Right cardiac atrium (tissue), 5 donors: ENCODE measurements at regions of chr3 and their contacts with region 1.

Region 1: GRCh38 chr3:66038726-66039589 is at the start of gene MAGI1:
- DNase-seq: peak; percentile 90 to 96 (median 95)
- ATAC-seq: peak; percentile 93 to 94
- H3K4me3 ChIP-seq: peak within 1 kb of the TSS; percentile 79
- H3K27ac ChIP-seq: peak within 1 kb of the TSS; percentile 92
- H3K4me1 ChIP-seq: peaks cover 4% of the 10 kb centered on the region
- H3K27me3 ChIP-seq: no peaks in the 10 kb centered on the region
- total RNA-seq, gene MAGI1: 32.7 to 38.3 (median 34.4) TPM

Region 2: DNA sequence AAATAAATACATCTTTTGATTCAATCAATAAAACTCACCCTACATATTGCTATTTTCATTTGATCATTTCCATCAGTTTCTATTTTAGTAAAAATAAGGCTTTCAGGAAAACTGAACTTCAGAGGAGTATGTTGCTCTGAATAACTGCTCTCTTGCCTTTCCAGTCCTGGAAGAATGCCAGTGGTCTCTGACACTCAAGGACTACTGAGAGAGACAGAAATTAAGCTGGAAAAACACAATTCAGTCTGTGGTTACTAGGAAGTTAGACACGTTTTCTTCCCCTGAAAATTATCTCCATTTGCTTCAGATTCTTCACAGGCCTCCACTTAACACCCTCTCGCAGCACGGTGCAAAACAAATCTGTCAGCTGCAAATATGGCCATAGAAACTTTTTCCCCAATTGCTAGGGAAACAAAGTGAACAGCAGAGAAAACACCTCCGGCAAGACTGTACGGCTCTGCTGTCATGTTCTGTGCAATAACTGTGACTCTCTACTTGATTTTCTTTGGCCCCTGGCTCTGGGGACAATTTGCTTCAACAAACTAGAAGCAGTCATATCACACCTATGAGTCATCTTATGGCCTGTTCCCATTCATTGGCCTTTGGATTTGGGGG is 353.2 kb before region 1 on chr3:
- intact Hi-C with region 1: no loop called
- DNase-seq: no peak
- ATAC-seq: peak; percentile 37 to 50
- H3K4me3 ChIP-seq: no peak overlapping the region
- H3K27ac ChIP-seq: no peak overlapping the region
- H3K4me1 ChIP-seq: peaks cover 1% of the 10 kb centered on the region
- H3K27me3 ChIP-seq: no peaks in the 10 kb centered on the region

Region 3: DNA sequence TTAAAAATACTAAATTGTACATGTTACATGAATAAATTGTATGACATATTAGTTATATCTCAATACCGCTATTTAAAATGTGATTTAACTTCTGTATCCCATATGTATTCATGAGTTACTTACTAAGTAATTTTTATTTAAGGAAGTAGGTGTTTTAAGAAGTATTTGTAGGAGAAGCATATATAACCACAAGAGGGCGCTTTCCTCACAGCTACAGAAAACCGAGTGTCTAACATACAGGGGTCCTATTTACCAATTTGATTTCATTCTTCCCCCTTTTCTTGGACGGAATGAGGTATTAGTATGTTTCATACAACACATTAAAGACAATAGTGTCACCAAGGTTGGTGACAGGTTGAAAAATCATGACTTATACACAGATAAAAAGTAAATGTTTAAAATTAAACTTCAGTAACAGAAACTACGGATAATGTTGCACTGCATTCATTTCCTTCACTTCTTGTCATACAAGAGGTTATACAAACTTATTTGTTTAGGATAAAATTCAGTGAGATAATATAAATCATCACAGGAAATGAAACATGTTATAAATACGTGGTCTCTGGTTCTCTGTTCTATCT is 253.8 kb before region 1 on chr3:
- intact Hi-C with region 1: loop called in 2 of 4 experiments (anchors 5 to 10 kb)
- DNase-seq: no peak
- ATAC-seq: no peak
- H3K4me3 ChIP-seq: no peak overlapping the region
- H3K27ac ChIP-seq: no peak overlapping the region
- H3K4me1 ChIP-seq: peaks cover 4% of the 10 kb centered on the region
- H3K27me3 ChIP-seq: no peaks in the 10 kb centered on the region

Region 4: GRCh38 chr3:65806600-65806999 is 232.4 kb before region 1 on chr3:
- intact Hi-C with region 1: loop called in 1 of 4 experiments (anchors 10 kb)
- DNase-seq: no peak
- ATAC-seq: no peak
- H3K4me3 ChIP-seq: no peak overlapping the region
- H3K27ac ChIP-seq: no peak overlapping the region
- H3K4me1 ChIP-seq: peaks cover 9% of the 10 kb centered on the region
- H3K27me3 ChIP-seq: no peaks in the 10 kb centered on the region

Region 5: DNA sequence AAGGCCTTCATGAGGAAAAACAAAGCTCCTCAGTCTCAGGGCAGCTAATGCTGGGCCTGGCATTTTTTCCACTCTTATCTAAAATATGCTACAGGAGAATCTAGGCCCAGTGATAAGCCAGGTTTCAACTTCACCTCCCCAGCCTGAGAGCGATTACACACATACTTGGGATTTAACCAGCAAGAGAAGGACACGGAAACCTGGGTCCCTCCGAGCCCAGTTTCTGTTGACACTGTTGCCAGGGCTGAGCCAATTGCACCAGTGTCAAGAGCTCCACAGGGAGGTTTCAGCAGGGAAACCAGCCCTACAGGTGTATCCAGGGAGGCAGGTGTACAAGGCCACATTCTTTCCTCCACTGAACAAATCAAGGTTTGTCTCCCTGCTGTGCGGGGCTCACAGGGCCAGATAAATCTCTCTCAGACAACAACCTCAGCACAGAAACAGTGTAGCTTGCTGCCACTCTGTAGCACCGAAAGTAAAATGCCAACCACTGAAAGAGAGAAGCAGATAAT is 85.6 kb before region 1 on chr3:
- intact Hi-C with region 1: loop called in 1 of 4 experiments (anchors 10 kb)
- DNase-seq: peak in 1 of 3 donors; percentile 52
- ATAC-seq: peak; percentile 53 to 56
- H3K4me3 ChIP-seq: no peak overlapping the region
- H3K27ac ChIP-seq: peak overlapping the region; percentile 68
- H3K4me1 ChIP-seq: peaks cover 7% of the 10 kb centered on the region
- H3K27me3 ChIP-seq: no peaks in the 10 kb centered on the region

Region 6: DNA sequence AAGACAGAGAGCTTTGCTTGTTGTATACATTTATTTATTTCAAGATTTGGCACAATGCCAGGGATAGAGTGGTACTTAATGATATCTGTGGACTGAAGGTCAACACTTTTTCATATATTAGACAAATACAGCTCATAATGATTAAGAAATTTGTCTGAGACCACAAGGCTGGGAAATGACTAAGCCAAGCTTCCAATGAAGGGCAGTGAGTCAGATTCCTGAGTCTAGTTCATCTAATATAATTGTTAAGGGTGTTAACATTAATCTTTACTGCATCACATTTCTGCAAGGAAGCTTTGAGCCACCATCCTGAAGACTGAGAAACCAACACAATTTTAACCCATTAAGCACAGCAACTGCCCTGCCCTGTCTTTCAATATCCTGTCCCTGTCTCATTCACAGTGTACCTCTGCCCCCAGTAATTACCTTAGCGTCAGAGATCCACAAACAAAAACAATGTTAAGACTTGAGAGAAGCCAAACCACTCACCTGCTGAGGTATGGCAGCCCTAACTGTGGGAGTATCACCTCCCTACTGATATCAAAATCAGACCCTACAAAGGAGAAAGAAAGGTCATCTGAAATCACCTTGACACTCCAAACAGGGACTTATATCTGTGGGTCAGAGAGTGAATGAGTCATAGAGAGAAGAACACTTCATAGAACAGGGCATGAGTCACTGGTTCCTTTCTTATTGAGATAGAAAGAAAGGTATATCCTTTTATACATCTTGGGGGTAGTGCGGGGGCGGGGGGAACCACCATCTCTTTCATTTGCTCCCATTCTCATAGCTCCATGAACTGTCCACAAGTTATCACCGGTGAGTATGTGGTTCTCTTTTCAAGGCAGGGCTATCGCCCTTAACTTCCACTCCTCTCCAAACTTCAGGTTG is 74.9 kb before region 1 on chr3:
- intact Hi-C with region 1: loop called in 2 of 4 experiments (anchors 10 kb)
- DNase-seq: no peak
- ATAC-seq: peak in 1 of 2 donors; percentile 81
- H3K4me3 ChIP-seq: no peak overlapping the region
- H3K27ac ChIP-seq: no peak overlapping the region
- H3K4me1 ChIP-seq: peaks cover 12% of the 10 kb centered on the region
- H3K27me3 ChIP-seq: no peaks in the 10 kb centered on the region

Region 7: GRCh38 chr3:66138336-66139313 is 99.7 kb after region 1 on chr3:
- intact Hi-C with region 1: loop called in 2 of 4 experiments (anchors 5 to 10 kb)
- DNase-seq: peak; percentile 30 to 73 (median 69)
- ATAC-seq: peak; percentile 66 to 89
- H3K4me3 ChIP-seq: no peak overlapping the region
- H3K27ac ChIP-seq: no peak overlapping the region
- H3K4me1 ChIP-seq: no peaks in the 10 kb centered on the region
- H3K27me3 ChIP-seq: no peaks in the 10 kb centered on the region

Region 8: DNA sequence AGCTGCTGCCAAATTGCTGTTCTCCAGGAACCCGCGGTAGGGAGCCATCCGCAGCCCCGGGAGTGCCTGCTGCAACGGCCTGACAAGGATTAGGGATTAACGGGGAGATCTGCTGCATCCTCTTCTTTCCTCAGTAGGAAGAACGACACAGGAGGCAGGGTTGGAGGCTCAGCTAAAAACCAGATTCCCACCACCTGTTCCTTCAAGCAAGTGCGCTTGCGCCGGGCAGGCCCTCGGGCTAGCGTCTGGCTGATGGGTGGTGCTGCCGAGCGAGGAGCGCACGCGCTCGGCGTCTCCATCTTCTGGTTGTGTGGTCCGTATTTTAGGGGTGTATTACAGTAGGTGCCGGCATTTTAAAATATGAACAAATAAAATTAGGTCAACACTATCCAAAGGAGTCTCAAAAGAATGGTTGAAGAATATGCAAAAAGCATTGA is 156.4 kb after region 1 on chr3:
- intact Hi-C with region 1: loop called in 1 of 4 experiments (anchors 10 kb)
- DNase-seq: peak; percentile 66 to 86 (median 80)
- ATAC-seq: peak; percentile 66 to 69
- H3K4me3 ChIP-seq: peak overlapping the region; percentile 40
- H3K27ac ChIP-seq: peak overlapping the region; percentile 86
- H3K4me1 ChIP-seq: peaks cover 2% of the 10 kb centered on the region
- H3K27me3 ChIP-seq: no peaks in the 10 kb centered on the region

Region 9: DNA sequence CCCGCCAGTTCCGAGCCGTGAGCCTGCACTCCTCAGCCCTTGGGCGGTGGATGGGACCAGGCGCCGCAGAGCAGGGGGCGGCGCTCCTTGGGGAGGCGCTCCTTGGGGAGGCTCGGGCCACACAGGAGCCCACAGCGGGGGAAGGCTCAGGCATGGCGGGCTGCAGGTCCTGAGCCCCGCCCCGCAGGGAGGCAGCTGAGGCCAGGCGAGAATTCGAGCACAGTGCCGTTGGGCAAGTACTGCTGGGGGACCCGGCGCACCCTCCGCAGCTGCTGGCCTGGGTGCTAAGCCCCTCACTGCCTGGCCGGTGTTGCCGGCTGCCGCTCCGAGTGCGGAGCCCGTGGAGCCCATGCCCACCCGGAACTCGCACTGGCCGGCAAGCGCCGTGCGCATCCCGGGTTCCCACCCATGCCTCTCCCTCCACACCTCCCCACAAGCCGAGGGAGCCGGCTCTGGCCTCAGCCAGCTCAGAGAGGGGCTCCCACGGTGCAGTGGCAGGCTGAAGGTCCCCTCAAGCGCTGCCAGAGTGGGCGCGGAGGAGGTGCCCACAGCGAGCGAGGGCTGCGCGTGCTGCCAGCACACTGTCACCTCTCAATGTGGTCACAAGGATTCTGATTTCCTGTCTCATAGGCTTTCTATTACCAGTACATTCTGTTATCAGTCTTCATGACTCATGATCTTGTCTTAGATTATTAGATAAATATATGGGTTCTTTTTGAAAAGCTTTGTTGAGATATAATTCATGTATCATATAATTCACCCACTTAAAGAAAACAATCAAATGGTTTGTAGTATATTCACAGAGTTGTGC is 505.9 kb after region 1 on chr3:
- intact Hi-C with region 1: no loop called
- DNase-seq: peak in 1 of 3 donors; percentile 48
- ATAC-seq: no peak
- H3K4me3 ChIP-seq: no peak overlapping the region
- H3K27ac ChIP-seq: no peak overlapping the region
- H3K4me1 ChIP-seq: no peaks in the 10 kb centered on the region
- H3K27me3 ChIP-seq: no peaks in the 10 kb centered on the region